OCI-LY7 (cell line): ENCODE measurements at regions of chrX and their contacts with region 1.

Region 1: DNA sequence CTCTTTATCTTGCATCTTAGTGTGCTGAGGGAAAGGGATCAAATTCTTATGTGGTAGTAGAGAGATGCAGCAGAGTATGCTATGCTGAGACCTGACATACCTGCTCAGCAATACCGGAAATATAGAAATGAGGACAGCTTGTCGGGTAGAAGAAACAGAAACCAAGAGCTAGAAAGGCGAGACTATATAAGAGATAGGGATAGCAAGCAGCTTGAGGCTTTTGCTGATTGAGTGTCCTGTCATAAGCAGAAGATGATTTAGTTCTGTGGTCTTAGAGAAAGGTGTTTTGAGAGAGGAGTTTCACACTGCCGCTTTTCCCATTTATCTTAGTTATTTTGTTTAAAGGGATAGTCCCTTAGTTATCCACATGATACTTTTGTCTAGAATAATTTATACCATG is 31.7 kb downstream of the USP9X start:
- DNase-seq: peak; percentile 39
- H3K4me3 ChIP-seq: peak overlapping the region; percentile 25
- H3K27ac ChIP-seq: no peak overlapping the region
- H3K4me1 ChIP-seq: peaks cover 18% of the 10 kb centered on the region
- CTCF ChIP-seq: no peak

Region 2: GRCh38 chrX:40922307-40922706 is 194.6 kb before region 1 on chrX:
- CTCF ChIA-PET with region 1: no interaction called
- POLR2A ChIA-PET with region 1: no interaction called
- intact Hi-C with region 1: loop called (anchors 10 kb)
- DNase-seq: peak; percentile 44
- H3K4me3 ChIP-seq: no peak overlapping the region
- H3K27ac ChIP-seq: no peak overlapping the region
- H3K4me1 ChIP-seq: no peaks in the 10 kb centered on the region
- CTCF ChIP-seq: peak; percentile 62